ENCODE measurements at regions of chr5 and their contacts with region 1.

Region 1: DNA sequence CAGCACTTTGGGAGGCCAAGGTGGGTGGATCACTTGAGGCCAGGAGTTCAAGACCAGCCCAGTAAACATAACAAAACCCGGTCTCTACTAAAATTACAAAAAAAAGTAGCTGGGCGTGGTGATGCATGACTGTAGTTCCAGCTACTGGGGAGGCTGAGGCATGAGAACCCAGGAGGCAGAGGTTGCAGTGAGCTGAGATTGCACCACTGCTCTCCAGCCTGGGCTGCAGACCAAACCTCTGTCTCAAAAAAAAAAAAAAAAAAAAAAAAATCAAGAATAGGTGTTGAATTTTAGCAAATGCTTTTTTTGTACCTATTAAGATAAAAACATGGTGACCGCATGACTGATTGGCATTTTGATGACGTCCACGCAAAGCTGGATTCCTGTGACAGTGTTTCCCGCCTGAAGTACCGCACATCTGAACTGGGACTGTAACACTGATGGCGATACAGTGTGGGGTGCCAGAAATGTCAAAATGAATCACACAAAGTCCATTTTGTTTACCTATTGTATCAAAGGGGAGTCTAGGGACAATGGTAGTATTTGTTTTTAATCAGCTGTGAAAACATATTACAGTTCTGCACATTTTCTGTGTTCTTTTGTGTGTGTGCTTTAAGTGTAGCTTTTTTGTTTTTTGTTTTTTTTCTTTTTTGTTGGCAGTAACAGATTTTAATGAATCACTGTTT is 23.2 kb upstream of the TBC1D9B start:
- DNase-seq: no peak
- ATAC-seq: no peak
- H3K4me3 Mint-ChIP-seq: no peak overlapping the region
- H3K27ac Mint-ChIP-seq: no peak overlapping the region
- H3K4me1 Mint-ChIP-seq: no peaks in the 10 kb centered on the region
- H3K27me3 Mint-ChIP-seq: peaks cover 3% of the 10 kb centered on the region; the same call in 1 of the 2 replicates
- CTCF ChIP-seq: no peak

Region 2: GRCh38 chr5:179907570-179908324 is 23.2 kb before region 1 on chr5 and contains the start of gene TBC1D9B:
- CTCF ChIA-PET with region 1: no interaction called
- POLR2A ChIA-PET with region 1: no interaction called
- DNase-seq: peak; percentile 60
- ATAC-seq: peak; percentile 68
- H3K4me3 Mint-ChIP-seq: peak within 1 kb of the TSS; percentile 81
- H3K27ac Mint-ChIP-seq: no peak within 1 kb of the TSS
- H3K4me1 Mint-ChIP-seq: peaks cover 3% of the 10 kb centered on the region; the same call in 1 of the 2 replicates
- H3K27me3 Mint-ChIP-seq: peaks cover under 1% of the 10 kb centered on the region; the same call in 1 of the 2 replicates
- CTCF ChIP-seq: peak; percentile 41; the same call in 1 of the 2 replicates
- total RNA-seq, gene TBC1D9B: 64.9 to 70.9 TPM (median 69.0 TPM) in 3 replicates

Region 3: GRCh38 chr5:180109920-180110319 is 179.0 kb after region 1 on chr5:
- CTCF ChIA-PET with region 1: no interaction called
- POLR2A ChIA-PET with region 1: interaction called, 11 read pairs
- DNase-seq: no peak
- ATAC-seq: no peak
- H3K4me3 Mint-ChIP-seq: no peak overlapping the region
- H3K27ac Mint-ChIP-seq: no peak overlapping the region
- H3K4me1 Mint-ChIP-seq: peaks cover 3% of the 10 kb centered on the region; the same call in 1 of the 2 replicates
- H3K27me3 Mint-ChIP-seq: peaks cover 8% of the 10 kb centered on the region
- CTCF ChIP-seq: no peak